ENCODE measurements at regions of chr3 and their contacts with region 1.

Region 1: GRCh38 chr3:82133070-82133606 is 371.7 kb upstream of the GBE1 start:
- DNase-seq: peak in 8 of 10 donors; percentile 33 to 88 (median 51)

Region 2: GRCh38 chr3:81666493-81667121 is 466.5 kb before region 1 on chr3:
- intact Hi-C with region 1: loop called (anchors 1 kb)
- DNase-seq: no peak

Region 3: GRCh38 chr3:82179291-82179690 is 46.2 kb after region 1 on chr3:
- intact Hi-C with region 1: no loop called
- DNase-seq: no peak

Region 4: GRCh38 chr3:82392203-82392775 is 259.2 kb after region 1 on chr3:
- intact Hi-C with region 1: no loop called
- DNase-seq: no peak